ENCODE measurements at regions of chr1 and their contacts with region 1.

Region 1: DNA sequence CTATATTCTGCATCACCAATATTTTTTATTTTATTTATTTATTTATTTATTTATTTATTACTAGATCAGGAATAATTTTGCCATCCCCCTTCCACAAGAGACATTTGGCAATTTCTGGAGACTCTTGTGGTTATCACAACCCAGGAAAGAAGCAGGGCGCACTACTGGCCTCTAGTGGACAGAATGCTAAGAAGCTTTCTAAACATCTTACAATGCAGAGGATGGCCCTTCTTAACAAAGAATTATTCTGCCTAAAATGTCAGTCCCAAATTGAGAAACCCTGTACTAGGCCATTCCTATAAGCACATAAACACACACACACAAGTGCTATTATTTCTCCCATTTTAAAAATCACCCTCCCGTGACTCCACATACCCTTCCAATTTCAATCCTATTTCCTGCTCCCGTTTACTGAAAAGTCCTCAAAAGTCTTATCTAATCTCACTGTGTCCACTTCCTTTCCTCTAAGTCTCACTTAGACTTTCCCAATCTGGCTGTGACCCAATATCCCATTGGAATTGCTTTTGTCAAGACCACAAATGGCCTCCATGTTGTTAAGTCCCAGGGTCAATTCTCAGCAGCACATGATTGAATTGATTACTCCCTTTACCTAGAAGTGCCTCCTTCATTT is 43.7 kb upstream of the RNF11 start:
- DNase-seq: peak; percentile 63
- H3K4me3 Mint-ChIP-seq: no peak overlapping the region
- H3K27ac Mint-ChIP-seq: no peak overlapping the region
- H3K4me1 Mint-ChIP-seq: no peaks in the 10 kb centered on the region
- H3K27me3 Mint-ChIP-seq: peaks cover 4% of the 10 kb centered on the region

Region 2: DNA sequence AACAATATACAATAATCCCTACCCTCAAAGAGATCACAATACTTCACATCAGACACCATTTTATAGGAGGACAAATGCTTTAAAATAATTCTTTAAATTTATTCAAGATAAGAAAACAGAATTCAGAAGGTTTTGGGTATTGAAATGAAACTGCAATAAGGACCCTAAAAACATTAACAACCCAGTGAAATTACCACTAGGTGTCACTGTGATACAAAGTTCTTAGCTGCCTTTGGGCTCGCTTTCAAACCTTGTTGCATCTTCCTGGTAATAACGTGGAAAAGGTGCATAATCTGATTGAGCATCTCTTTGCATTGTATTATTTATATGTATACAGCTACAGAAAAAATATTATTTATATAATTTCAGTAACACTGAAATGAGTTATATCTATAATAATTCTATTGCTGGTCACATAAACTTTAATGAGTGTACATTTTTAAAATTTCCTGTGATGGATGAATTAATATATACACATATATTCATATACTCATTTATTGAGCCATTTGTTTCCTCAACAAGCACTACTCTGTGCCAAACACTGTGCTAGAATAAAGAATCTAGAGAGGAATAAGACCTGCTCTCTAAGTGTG is 417.5 kb before region 1 on chr1:
- CTCF ChIA-PET with region 1: interaction called, 149 read pairs
- POLR2A ChIA-PET with region 1: no interaction called
- intact Hi-C with region 1: loop called (anchors 2 kb)
- DNase-seq: no peak
- H3K4me3 Mint-ChIP-seq: no peak overlapping the region
- H3K27ac Mint-ChIP-seq: no peak overlapping the region
- H3K4me1 Mint-ChIP-seq: no peaks in the 10 kb centered on the region
- H3K27me3 Mint-ChIP-seq: no peaks in the 10 kb centered on the region

Region 3: DNA sequence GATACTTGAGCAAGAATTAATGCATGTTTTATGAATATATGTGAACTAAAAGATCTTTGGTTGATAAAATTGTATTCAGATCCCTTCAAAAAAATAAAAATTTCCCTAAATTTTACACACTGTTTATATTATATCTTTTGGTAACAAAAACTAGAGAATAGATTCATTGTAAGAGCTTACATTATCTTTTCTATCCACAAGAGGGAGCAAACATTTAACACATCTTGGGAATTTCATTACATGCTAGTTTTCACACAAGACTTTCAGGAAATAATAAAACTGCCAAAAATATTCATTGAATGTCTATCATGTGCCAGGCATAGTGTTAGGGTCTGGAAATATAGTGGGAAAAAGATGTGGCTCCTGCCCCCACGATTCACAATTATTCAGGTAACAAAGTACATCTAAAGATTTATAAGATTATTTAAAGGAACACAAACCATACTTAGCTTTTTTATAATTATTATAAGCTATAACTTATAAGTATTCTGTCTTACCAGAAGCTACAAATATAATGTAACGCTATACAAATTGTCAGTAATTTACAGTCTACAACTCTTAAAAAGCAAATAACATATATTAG is 262.9 kb before region 1 on chr1:
- CTCF ChIA-PET with region 1: interaction called, 62 read pairs
- POLR2A ChIA-PET with region 1: no interaction called
- intact Hi-C with region 1: loop called (anchors 1 kb)
- DNase-seq: no peak
- H3K4me3 Mint-ChIP-seq: no peak overlapping the region
- H3K27ac Mint-ChIP-seq: no peak overlapping the region
- H3K4me1 Mint-ChIP-seq: peaks cover 26% of the 10 kb centered on the region
- H3K27me3 Mint-ChIP-seq: no peaks in the 10 kb centered on the region

Region 4: GRCh38 chr1:51088488-51088887 is 103.8 kb before region 1 on chr1:
- CTCF ChIA-PET with region 1: interaction called, 14 read pairs
- POLR2A ChIA-PET with region 1: no interaction called
- intact Hi-C with region 1: no loop called
- DNase-seq: no peak
- H3K4me3 Mint-ChIP-seq: no peak overlapping the region
- H3K27ac Mint-ChIP-seq: no peak overlapping the region
- H3K4me1 Mint-ChIP-seq: no peaks in the 10 kb centered on the region
- H3K27me3 Mint-ChIP-seq: peaks cover 39% of the 10 kb centered on the region

Region 5: GRCh38 chr1:51203121-51203873 is 11.0 kb after region 1 on chr1:
- CTCF ChIA-PET with region 1: interaction called, 12 read pairs
- POLR2A ChIA-PET with region 1: no interaction called
- intact Hi-C with region 1: no loop called
- DNase-seq: no peak
- H3K4me3 Mint-ChIP-seq: no peak overlapping the region
- H3K27ac Mint-ChIP-seq: no peak overlapping the region
- H3K4me1 Mint-ChIP-seq: peaks cover 5% of the 10 kb centered on the region
- H3K27me3 Mint-ChIP-seq: no peaks in the 10 kb centered on the region

Region 6: DNA sequence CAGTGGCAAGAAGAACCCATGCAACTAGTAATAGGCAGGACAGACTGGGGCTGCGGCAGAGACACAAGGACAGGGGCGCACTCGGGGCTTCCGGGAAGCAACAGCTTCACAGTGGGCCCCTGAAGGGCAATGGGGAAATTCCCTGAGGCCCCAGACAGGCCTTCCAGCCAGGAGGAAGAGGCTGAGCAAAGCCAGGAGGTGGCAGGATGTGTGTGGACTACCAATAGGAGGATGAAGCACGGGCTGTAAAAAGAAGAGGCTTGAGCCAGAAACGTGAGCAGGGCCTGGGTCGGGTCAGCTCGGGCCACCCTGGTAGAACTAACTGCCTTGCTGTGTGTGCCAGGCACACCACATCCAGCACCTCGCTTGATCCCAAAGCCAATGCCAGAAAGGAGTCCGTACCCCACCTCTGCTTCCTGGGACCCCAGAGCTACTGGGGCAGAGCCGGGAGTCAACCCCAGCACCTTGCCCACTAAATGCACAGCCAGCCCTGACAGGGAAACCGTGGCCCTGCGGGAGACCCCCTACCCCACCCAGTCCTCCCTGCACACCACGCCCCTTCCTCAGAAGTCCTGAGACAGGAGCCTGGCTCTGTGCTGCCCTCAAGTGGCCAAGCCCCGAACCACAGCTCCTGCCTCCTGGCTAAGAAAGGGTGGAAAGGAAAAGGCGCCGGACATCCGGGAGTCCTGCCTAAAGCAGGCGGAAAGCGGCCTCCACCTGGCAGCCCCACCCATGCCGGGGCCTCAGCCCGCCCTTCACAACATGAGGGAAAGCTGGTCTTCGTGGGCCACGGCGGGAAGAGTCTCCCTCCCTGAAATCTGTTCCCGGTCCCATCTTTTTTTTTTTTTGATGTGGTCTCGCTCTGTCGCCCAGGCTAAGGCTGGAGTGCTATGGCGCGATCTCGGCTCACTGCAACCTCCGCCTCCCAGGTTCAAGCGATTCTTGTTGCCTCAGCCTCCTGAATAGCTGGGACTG is 104.3 kb after region 1 on chr1:
- CTCF ChIA-PET with region 1: interaction called, 36 read pairs
- POLR2A ChIA-PET with region 1: no interaction called
- intact Hi-C with region 1: loop called (anchors 2 kb)
- DNase-seq: peak; percentile 87
- H3K4me3 Mint-ChIP-seq: peak overlapping the region; percentile 48
- H3K27ac Mint-ChIP-seq: no peak overlapping the region
- H3K4me1 Mint-ChIP-seq: peaks cover 14% of the 10 kb centered on the region
- H3K27me3 Mint-ChIP-seq: no peaks in the 10 kb centered on the region